Common myeloid progenitor, CD34-positive (primary cell): ENCODE measurements at regions of chr3 and their contacts with region 1.

Region 1: DNA sequence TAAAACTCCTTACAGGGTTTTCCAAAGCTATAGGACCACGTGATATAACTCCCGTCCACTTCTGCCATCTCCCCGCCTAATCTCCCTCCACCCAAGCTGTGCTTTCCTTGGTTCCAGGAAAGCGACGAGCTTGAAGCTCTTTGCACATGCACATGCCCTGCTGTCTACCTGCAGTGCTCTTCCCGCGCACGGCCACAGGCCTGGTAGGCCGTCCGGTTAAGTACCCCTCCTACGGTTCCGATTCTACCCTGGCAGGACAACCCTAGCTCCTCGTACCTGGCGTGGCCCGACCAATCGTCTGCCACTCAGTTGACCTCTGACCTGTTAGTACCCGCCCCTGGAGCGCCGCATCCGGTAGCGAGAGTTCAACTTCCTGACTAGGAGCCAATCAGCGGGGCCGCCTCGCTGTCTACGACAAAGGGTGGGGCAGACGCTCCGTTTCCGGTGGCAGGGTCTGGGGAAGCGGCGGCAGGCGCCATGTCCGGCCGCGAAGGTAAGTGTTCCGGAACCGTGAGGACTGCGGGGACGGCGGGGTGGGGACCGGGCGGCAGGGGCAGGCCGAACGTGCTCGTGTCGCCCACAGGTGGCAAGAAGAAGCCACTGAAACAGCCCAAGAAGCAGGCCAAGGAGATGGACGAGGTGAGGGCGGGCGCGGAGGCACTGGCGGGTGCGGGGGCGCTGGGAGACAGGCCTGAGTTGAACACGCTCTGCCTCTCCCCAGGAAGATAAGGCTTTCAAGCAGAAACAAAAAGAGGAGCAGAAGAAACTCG is at the starts of genes CCDC51 and TMA7:
- DNase-seq: peak; percentile 97 to 98 (median 97)
- H3K4me3 ChIP-seq: peak within 1 kb of the TSS; percentile 71 to 99 (median 87)
- H3K27ac ChIP-seq: peak within 1 kb of the TSS; percentile 74 to 88
- H3K4me1 ChIP-seq: peaks cover 8 to 37% (median 22%) of the 10 kb centered on the region in 4 experiments
- H3K27me3 ChIP-seq: no peaks in the 10 kb centered on the region

Region 2: DNA sequence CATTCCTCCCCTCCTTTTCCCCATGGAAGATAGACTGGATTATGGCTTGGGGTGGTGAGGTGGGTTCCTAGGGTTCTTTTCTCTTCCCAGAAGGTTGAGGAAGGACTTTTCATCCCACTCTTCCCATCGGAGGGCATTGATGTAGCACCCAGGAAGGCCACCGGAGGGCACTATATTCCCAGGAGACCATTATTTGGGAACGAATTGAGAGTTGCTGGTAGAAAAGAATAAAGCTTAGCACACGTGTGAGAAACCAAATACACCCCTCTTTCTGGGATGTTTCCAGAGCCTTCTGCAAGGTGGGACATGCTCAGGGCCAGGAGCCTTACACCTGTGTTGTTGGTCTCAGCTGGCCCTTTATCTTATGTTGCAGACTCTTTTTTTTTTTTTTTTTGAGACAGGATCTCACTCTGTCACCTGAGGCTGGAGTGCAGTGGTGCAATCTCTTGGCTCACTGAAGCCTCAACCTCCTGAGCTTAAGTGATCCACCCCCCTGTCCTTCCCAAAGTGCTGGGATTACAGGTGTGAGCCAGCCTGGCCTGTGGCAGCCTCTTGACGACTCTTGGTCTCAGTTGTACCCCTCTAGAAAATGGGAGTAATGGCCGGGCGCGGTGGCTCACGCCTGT is 245.4 kb before region 1 on chr3:
- CTCF ChIA-PET with region 1: interaction called, 19 read pairs
- POLR2A ChIA-PET with region 1: no interaction called
- DNase-seq: peak; percentile 14 to 25 (median 18)
- H3K4me3 ChIP-seq: no peak overlapping the region
- H3K27ac ChIP-seq: no peak overlapping the region
- H3K4me1 ChIP-seq: peaks cover 0 to 3% (median 0%) of the 10 kb centered on the region in 4 experiments
- H3K27me3 ChIP-seq: no peaks in the 10 kb centered on the region

Region 3: GRCh38 chr3:48273594-48274211 is 166.3 kb before region 1 on chr3:
- CTCF ChIA-PET with region 1: interaction called, 164 read pairs
- POLR2A ChIA-PET with region 1: interaction called, 3 read pairs
- DNase-seq: peak; percentile 69 to 82 (median 77)
- H3K4me3 ChIP-seq: no peak overlapping the region
- H3K27ac ChIP-seq: no peak overlapping the region
- H3K4me1 ChIP-seq: no peaks in the 10 kb centered on the region
- H3K27me3 ChIP-seq: no peaks in the 10 kb centered on the region

Region 4: DNA sequence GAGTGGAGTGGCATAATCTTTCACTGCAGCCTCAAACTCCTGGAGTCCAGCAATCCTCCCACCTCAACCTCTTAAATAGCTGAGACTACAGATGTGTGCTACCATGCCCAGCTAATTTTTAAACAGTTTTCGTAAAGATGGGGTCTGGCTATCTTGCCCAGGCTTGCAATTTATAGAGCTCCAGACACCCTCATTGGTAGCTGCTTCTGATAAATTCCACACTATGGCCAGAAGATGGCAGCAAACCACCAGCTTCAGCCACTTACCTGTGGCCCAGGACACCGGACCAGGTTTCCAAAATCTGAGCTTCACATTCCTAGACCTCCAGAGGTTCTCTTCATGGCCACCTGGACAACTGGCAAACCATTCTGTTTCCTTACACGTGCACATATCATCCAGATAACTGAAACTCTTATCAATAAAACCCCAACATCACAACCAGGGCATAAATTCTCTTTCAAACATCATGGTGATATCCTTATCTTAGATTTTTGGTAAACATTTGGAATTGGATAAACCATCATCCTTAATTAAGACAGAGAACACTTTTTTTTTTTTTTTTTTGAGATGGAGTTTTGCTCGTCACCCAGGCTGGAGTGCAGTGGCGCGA is 39.1 kb before region 1 on chr3:
- CTCF ChIA-PET with region 1: interaction called, 137 read pairs
- POLR2A ChIA-PET with region 1: interaction called, 8 read pairs
- DNase-seq: peak; percentile 67 to 79 (median 72)
- H3K4me3 ChIP-seq: no peak overlapping the region
- H3K27ac ChIP-seq: no peak overlapping the region
- H3K4me1 ChIP-seq: peaks cover 0 to 6% (median 4%) of the 10 kb centered on the region in 4 experiments
- H3K27me3 ChIP-seq: no peaks in the 10 kb centered on the region

Region 5: DNA sequence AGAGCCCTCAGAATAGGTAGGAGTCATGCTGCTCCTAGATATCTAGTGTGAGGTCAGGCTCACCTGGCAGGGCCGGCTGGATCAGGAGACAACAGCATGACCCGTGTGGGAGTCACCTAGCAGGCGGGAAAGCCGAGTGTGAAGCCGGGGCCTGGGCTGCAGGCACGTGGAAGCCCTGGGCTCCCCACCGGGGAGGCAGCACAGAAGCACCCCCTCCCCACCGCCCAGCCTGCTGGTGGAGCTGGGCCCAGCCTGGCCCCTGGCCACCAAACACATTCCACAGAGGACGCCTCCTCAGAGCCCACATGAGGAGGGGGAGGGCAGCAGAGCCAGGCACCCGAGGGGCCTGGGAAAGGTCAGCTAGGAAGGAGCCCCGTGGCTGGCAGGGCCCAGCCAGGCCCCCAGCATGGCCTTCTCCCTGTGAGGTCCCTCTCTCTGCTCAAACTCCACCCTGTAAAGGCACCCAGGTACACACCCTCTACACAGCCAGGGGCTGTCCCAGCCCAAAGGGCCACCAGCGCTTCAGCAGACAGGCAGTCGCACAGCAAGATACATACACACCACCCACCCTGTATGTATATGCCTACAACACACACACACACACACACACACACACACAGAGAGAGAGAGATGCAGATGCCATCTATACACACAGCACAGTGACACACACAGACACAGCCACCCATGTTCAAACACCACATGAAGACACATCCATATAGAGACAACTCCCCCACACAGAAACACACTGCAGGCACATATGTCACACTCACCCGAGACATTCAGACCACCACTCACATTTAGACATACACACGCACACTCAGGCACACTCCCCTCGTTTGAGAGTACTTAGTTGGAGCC is 14.6 kb before region 1 on chr3:
- CTCF ChIA-PET with region 1: interaction called, 22 read pairs
- POLR2A ChIA-PET with region 1: no interaction called
- DNase-seq: no peak
- H3K4me3 ChIP-seq: no peak overlapping the region
- H3K27ac ChIP-seq: no peak overlapping the region
- H3K4me1 ChIP-seq: peaks cover 0 to 14% (median 11%) of the 10 kb centered on the region in 4 experiments
- H3K27me3 ChIP-seq: peaks cover 0 to 9% (median 3%) of the 10 kb centered on the region in 5 experiments

Region 6: GRCh38 chr3:48548729-48549705 is 109.0 kb after region 1 on chr3:
- CTCF ChIA-PET with region 1: interaction called, 15 read pairs
- POLR2A ChIA-PET with region 1: no interaction called
- DNase-seq: peak; percentile 73 to 87 (median 82)
- H3K4me3 ChIP-seq: no peak overlapping the region
- H3K27ac ChIP-seq: no peak overlapping the region
- H3K4me1 ChIP-seq: peaks cover 0 to 24% (median 18%) of the 10 kb centered on the region in 4 experiments
- H3K27me3 ChIP-seq: no peaks in the 10 kb centered on the region